Stomach (tissue), 19 donors: ENCODE measurements at regions of chr18 and their contacts with region 1.

Region 1: GRCh38 chr18:58529714-58530354 is 99.1 kb downstream of the ALPK2 start:
- DNase-seq: peak; percentile 70 to 71
- H3K4me3 ChIP-seq: no peak overlapping the region
- H3K27ac ChIP-seq: no peak overlapping the region
- H3K4me1 ChIP-seq: peaks cover 0 to 10% (median 7%) of the 10 kb centered on the region in 4 donors
- H3K27me3 ChIP-seq: no peaks in the 10 kb centered on the region
- CTCF ChIP-seq: peak in 5 of 7 experiments; percentile 67 to 80 (median 74)
- EP300 ChIP-seq: no peak
- POLR2A ChIP-seq: no peak

Region 2: GRCh38 chr18:58466636-58467205 is 63.1 kb before region 1 on chr18:
- intact Hi-C with region 1: no loop called
- DNase-seq: peak; percentile 58 to 63
- H3K4me3 ChIP-seq: no peak overlapping the region
- H3K27ac ChIP-seq: no peak overlapping the region
- H3K4me1 ChIP-seq: no peaks in the 10 kb centered on the region
- H3K27me3 ChIP-seq: no peaks in the 10 kb centered on the region
- CTCF ChIP-seq: no peak
- EP300 ChIP-seq: no peak
- POLR2A ChIP-seq: no peak

Region 3: DNA sequence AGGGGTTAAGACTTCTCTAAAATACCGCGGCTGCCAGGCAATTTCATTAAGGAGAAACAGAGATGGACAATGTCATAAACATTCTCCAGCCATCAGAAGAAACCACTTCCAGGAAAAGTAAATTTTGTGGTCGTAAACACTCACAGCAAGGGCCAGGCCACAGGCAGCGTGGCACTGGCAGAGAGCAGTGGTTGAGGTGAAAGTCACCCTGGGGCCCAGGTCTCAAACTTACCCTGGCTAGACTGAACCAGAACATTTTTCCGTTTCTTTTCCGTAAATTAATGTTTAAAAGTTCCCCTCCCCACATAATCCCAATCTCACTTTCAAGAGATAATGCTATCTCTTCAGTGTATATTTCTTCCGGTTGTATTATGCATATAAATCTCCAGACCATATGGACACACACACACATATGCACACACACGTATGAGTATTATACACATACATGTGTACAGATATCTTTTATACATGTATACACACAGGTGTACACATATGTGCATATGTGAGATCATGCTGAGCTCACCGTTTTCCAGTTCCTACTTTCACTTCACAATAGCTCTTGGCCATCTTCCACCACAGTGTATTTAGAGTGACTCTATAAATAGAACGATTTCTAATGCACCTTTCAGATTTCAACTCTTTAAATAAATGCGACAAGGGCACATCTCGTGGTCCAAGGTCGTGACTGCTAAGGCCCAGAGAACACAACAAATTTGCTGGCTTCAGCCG is 231.6 kb after region 1 on chr18:
- intact Hi-C with region 1: loop called (anchors 5 kb)
- DNase-seq: peak; percentile 52 to 57
- H3K4me3 ChIP-seq: no peak overlapping the region
- H3K27ac ChIP-seq: peak overlapping the region in 3 of 5 donors; percentile 26 to 55 (median 50)
- H3K4me1 ChIP-seq: peaks cover 0 to 19% (median 10%) of the 10 kb centered on the region in 4 donors
- H3K27me3 ChIP-seq: peaks cover 0 to 19% (median 0%) of the 10 kb centered on the region in 3 donors
- CTCF ChIP-seq: no peak
- EP300 ChIP-seq: no peak
- POLR2A ChIP-seq: no peak